T-cell (primary cell): ENCODE measurements at regions of chr11 and their contacts with region 1.

Region 1: DNA sequence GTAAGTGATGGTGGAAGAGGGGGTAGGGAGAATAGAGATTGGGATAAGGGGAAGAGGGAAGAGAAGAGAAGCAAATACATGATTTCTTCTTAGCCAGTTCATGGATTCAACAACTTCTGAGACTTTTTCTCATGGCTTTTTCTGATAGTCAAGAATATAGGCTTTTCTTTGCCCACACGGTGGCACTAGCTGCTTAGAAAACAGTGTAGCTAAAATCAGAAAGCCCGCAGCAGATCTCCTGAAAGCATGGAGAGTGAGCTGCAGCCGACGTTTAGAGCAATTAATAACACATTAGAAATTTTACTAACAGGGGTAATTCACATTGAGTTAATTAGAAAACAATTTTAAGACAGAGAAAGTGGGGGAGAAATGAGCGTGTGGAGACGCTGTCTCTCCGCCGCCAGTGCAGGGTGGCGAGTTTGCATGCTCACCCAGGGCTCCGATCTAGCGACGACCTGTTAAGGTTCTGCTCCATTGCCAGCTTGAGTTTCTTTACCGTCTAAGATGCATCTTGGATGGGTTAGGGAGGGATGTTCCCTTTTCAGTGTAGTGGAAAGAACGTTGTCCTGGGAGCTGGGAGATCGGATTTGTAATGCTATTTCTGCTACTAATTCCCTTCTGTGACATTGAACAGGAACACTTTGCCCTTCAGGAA is 3.3 kb upstream of the RAG1 start:
- DNase-seq: peak in 31 of 35 experiments; percentile 5 to 72 (median 30)
- ATAC-seq: peak; percentile 56 to 69 (median 60)
- H3K4me3 ChIP-seq: peak overlapping the region; percentile 4 to 48
- H3K4me3 Mint-ChIP-seq: peak overlapping the region; percentile 64 to 79 (median 68)
- H3K27ac ChIP-seq: no peak overlapping the region
- H3K27ac Mint-ChIP-seq: no peak overlapping the region
- H3K4me1 ChIP-seq: peaks cover 0 to 12% of the 10 kb centered on the region in 2 experiments
- H3K4me1 Mint-ChIP-seq: peaks cover 7 to 20% (median 14%) of the 10 kb centered on the region in 3 donors
- H3K27me3 ChIP-seq: peaks cover 0 to 10% of the 10 kb centered on the region in 2 experiments
- H3K27me3 Mint-ChIP-seq: peaks cover 34% of the 10 kb centered on the region in 2 donors

Region 2: GRCh38 chr11:36672813-36673450 is 108.4 kb after region 1 on chr11:
- CTCF ChIA-PET with region 1: interaction called, 5 to 11 read pairs
- POLR2A ChIA-PET with region 1: no interaction called
- DNase-seq: peak in 2 of 35 experiments; percentile 17 to 59
- ATAC-seq: no peak
- H3K4me3 ChIP-seq: no peak overlapping the region
- H3K4me3 Mint-ChIP-seq: no peak overlapping the region
- H3K27ac ChIP-seq: no peak overlapping the region
- H3K27ac Mint-ChIP-seq: no peak overlapping the region
- H3K4me1 ChIP-seq: no peaks in the 10 kb centered on the region
- H3K4me1 Mint-ChIP-seq: no peaks in the 10 kb centered on the region
- H3K27me3 ChIP-seq: peaks cover 0 to 9% of the 10 kb centered on the region in 2 experiments
- H3K27me3 Mint-ChIP-seq: peaks cover 32 to 34% of the 10 kb centered on the region in 2 donors

Region 3: GRCh38 chr11:36746886-36747710 is 182.6 kb after region 1 on chr11:
- CTCF ChIA-PET with region 1: interaction called, 34 to 97 read pairs
- POLR2A ChIA-PET with region 1: no interaction called
- DNase-seq: peak; percentile 40 to 92 (median 71)
- ATAC-seq: peak; percentile 95 to 99 (median 97)
- H3K4me3 ChIP-seq: no peak overlapping the region
- H3K4me3 Mint-ChIP-seq: no peak overlapping the region
- H3K27ac ChIP-seq: no peak overlapping the region
- H3K27ac Mint-ChIP-seq: no peak overlapping the region
- H3K4me1 ChIP-seq: no peaks in the 10 kb centered on the region
- H3K4me1 Mint-ChIP-seq: peaks cover 6% of the 10 kb centered on the region in 3 donors
- H3K27me3 ChIP-seq: peaks cover 0 to 3% of the 10 kb centered on the region in 2 experiments
- H3K27me3 Mint-ChIP-seq: peaks cover 22 to 27% of the 10 kb centered on the region in 2 donors